K562 (cell line): ENCODE measurements at regions of chr21 and their contacts with region 1.

Region 1: GRCh38 chr21:14675774-14676530 is 129.8 kb upstream of the SAMSN1 start:
- DNase-seq: peak in 1 of 4 experiments; percentile 67
- ATAC-seq: peak; percentile 51
- H3K4me3 ChIP-seq: no peak overlapping the region
- H3K27ac ChIP-seq: peak overlapping the region; percentile 86
- H3K4me1 ChIP-seq: peaks cover 8 to 54% of the 10 kb centered on the region in 2 experiments
- H3K27me3 ChIP-seq: no peaks in the 10 kb centered on the region
- CTCF ChIP-seq: no peak
- EP300 ChIP-seq: peak; percentile 59
- POLR2A ChIP-seq: no peak
- RAD21 ChIP-seq: no peak

Region 2: DNA sequence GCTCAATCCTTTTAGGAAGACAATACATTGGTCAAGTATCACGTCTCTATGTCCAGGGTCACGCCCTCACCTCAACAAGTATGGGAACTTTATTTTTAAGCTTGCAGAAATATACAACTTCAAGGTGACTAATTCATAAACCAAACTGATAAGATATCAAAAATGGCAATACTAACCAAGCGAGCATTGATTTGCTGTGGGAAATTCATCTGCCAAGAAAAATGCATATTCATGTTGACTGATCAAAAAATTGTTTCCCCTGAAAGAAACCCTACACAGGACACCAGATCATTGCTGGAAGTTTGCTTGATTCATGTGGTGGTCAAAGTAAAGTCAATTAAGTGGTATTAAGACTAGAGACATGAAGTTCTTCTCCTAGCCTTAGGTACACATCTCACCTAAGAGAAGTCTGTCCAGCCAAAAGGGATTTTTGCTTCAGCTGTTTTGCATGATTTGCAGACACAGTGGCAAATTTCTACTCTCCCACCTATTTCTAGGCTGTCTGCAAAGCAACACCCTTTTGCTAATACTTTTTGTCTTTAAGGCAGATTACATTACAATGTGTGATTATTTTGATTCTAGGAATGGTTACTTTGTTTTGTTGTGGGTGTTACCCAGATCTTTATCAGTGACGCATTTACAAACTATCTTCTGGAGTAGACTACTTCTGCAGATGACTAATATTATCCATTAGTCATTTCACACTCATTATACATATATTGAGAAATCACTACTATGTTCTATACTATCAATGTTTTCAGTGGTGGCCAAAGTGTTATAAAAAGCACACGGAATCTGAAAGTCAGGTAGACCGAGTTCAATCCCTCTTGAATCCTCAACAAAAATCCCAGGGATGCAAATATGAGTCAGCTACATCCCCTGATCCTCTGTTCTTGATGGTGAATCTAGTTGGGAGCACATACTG is 142.2 kb before region 1 on chr21:
- CTCF ChIA-PET with region 1: no interaction called
- POLR2A ChIA-PET with region 1: no interaction called
- in situ Hi-C with region 1: no loop called
- intact Hi-C with region 1: loop called (anchors 5 kb)
- DNase-seq: peak in 2 of 4 experiments; percentile 19 to 43
- ATAC-seq: peak; percentile 11
- H3K4me3 ChIP-seq: no peak overlapping the region
- H3K27ac ChIP-seq: peak overlapping the region; percentile 67; the same call in 2 of the 3 replicates
- H3K4me1 ChIP-seq: peaks cover 3 to 38% of the 10 kb centered on the region in 2 experiments; a peak in 4 of 5 replicates
- H3K27me3 ChIP-seq: no peaks in the 10 kb centered on the region
- CTCF ChIP-seq: no peak
- EP300 ChIP-seq: 0 out of 2 replicates have a peak, but pooled peaks have one; percentile 46
- POLR2A ChIP-seq: 0 out of 2 replicates have a peak, but pooled peaks have one; percentile 9
- RAD21 ChIP-seq: no peak

Region 3: DNA sequence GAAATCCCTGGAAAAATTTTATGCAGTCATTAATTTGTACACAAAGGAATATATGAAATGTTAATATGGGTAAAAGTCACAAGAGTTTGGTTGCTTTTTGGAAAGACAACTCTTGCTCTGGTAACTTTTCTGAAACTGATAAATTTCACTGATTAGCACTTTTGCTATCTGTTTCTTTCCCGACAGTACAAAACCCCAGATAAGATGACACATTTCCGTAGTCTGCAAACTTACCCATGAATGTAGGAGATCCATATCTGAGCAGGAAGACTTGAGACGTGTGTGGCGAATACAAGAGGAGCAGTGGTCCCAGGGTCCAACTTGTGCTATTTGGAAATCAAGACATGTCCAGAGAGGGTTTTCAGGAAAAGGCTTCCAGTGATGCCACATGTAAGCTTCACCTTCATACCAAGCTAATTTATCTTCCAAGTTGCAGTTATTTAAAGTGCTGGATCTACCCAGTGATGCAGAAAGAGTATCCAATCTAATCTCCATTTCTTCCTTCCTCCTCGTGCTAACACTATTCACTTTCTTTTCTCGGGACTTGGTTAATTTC is 94.0 kb before region 1 on chr21:
- CTCF ChIA-PET with region 1: no interaction called
- POLR2A ChIA-PET with region 1: no interaction called
- in situ Hi-C with region 1: no loop called
- intact Hi-C with region 1: loop called (anchors 5 kb)
- DNase-seq: peak in 2 of 4 experiments; percentile 36 to 80
- ATAC-seq: peak; percentile 66
- H3K4me3 ChIP-seq: peak overlapping the region; percentile 19
- H3K27ac ChIP-seq: peak overlapping the region; percentile 91
- H3K4me1 ChIP-seq: peaks cover 0 to 25% of the 10 kb centered on the region in 2 experiments; a peak in 3 of 5 replicates
- H3K27me3 ChIP-seq: no peaks in the 10 kb centered on the region
- CTCF ChIP-seq: no peak
- EP300 ChIP-seq: peak; percentile 95
- POLR2A ChIP-seq: peak; percentile 55
- RAD21 ChIP-seq: no peak; a peak in 1 of 4 replicates

Region 4: DNA sequence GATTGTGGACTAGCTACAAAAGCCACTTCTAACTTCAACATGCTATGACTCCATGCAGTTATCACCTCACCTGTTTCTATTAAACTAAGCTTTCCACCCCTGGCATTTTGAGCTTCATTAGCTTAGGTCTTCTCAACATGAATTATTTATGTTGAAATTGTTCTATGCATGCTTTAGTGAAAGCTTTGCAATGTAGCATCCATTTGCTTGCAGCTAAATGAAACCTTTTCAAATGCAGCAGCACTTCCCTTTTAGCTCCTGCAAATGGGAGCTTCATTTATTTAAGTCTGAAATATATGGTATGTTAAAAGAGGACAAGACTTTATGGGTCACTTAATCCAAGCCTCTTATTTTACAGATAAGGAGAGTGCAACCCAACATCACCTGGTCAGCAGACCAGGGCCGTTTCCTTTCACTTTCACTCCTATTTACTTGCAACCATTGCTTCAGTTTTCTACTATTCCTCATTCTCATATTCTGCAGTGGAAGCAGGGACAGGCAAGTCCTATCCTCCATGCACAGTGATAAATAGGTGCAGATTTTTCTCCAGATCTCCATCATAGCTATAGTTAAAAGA is 73.5 kb before region 1 on chr21:
- CTCF ChIA-PET with region 1: no interaction called
- POLR2A ChIA-PET with region 1: no interaction called
- in situ Hi-C with region 1: no loop called
- intact Hi-C with region 1: loop called (anchors 5 kb)
- DNase-seq: peak in 1 of 4 experiments; percentile 32
- ATAC-seq: peak; percentile 46
- H3K4me3 ChIP-seq: no peak overlapping the region
- H3K27ac ChIP-seq: peak overlapping the region; percentile 39; the same call in 2 of the 3 replicates
- H3K4me1 ChIP-seq: peaks cover 7 to 41% of the 10 kb centered on the region in 2 experiments; a peak in 4 of 5 replicates
- H3K27me3 ChIP-seq: no peaks in the 10 kb centered on the region
- CTCF ChIP-seq: no peak
- EP300 ChIP-seq: no peak
- POLR2A ChIP-seq: no peak
- RAD21 ChIP-seq: no peak